Vagina (tissue), 2 donors: ENCODE measurements at regions of chr7 and their contacts with region 1.

Region 1: GRCh38 chr7:83708531-83708930 is 59.6 kb upstream of the SEMA3E start:
- DNase-seq: no peak
- H3K4me3 ChIP-seq: no peak overlapping the region
- H3K27ac ChIP-seq: no peak overlapping the region
- H3K4me1 ChIP-seq: no peaks in the 10 kb centered on the region
- H3K27me3 ChIP-seq: no peaks in the 10 kb centered on the region
- CTCF ChIP-seq: no peak
- POLR2A ChIP-seq: no peak

Region 2: DNA sequence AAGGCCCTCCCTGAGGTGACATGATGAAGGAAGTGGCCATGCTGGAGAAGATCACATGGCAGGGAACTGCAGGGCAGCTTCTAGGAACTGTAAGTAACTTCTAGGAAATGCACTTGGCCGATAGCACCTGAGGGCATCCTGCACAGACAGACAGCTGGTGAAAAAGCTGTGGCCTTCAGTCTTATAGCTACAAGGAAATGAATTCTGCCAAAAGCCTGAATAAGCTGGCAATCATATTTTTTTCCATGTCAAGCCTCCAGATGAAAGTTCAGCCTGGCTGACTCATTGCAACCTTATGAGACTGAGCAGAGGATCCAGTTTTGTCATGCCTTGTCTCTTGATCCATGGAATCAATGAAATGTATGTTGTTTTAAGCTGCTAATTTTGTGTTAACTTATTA is 1173.8 kb before region 1 on chr7:
- intact Hi-C with region 1: loop called (anchors 5 kb)
- DNase-seq: no peak
- H3K4me3 ChIP-seq: no peak overlapping the region
- H3K27ac ChIP-seq: no peak overlapping the region
- H3K4me1 ChIP-seq: no peaks in the 10 kb centered on the region
- H3K27me3 ChIP-seq: no peaks in the 10 kb centered on the region
- CTCF ChIP-seq: no peak
- POLR2A ChIP-seq: no peak